GM10248 (cell line): ENCODE measurements at regions of chr4 and their contacts with region 1.

Region 1: GRCh38 chr4:39458505-39459300 is at the starts of genes LIAS and RPL9:
- DNase-seq: peak; percentile 96
- CTCF ChIP-seq: no peak

Region 2: DNA sequence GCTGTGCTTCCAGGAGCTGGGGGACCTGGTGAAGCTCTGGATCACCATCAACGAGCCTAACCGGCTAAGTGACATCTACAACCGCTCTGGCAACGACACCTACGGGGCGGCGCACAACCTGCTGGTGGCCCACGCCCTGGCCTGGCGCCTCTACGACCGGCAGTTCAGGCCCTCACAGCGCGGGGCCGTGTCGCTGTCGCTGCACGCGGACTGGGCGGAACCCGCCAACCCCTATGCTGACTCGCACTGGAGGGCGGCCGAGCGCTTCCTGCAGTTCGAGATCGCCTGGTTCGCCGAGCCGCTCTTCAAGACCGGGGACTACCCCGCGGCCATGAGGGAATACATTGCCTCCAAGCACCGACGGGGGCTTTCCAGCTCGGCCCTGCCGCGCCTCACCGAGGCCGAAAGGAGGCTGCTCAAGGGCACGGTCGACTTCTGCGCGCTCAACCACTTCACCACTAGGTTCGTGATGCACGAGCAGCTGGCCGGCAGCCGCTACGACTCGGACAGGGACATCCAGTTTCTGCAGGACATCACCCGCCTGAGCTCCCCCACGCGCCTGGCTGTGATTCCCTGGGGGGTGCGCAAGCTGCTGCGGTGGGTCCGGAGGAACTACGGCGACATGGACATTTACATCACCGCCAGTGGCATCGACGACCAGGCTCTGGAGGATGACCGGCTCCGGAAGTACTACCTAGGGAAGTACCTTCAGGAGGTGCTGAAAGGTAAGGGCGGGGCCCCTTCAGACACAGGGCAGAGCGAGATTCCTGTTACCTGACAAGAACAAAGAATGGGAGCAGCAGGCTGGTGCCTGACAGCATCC is 11.7 kb before region 1 on chr4:
- CTCF ChIA-PET with region 1: interaction called, 6 read pairs
- POLR2A ChIA-PET with region 1: interaction called, 10 read pairs
- DNase-seq: peak; percentile 79
- CTCF ChIP-seq: peak; percentile 43